Natural killer cell (primary cell): ENCODE measurements at regions of chr6 and their contacts with region 1.

Region 1: DNA sequence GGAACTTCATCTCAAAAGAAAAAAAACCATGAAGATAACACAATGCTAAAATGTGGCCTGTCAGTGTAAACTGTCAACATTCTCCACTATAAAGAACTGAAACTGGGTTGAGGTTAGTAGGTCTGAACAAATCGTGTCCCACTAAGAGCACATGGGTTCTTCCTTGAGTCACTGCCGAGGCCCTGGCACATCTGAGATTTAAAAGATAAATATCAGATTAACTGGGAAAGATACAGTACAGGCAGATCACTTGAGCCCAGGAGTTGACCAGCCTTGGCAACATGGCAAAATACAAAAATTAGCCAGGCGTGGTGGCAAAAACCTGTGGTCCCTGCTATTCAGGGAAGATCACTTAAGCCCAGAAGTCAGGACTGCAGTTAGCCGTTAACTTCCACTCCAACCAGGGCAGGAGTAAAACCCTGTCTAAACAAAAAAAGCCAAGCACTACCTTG is 5.6 kb downstream of the EEF1A1 start:
- DNase-seq: peak in 1 of 2 donors; percentile 49
- ATAC-seq: no peak
- H3K4me3 ChIP-seq: no peak overlapping the region
- H3K4me3 Mint-ChIP-seq: peak overlapping the region; percentile 53
- H3K27ac ChIP-seq: peak overlapping the region; percentile 55
- H3K27ac Mint-ChIP-seq: peak overlapping the region; percentile 84 to 100
- H3K4me1 ChIP-seq: peaks cover 40% of the 10 kb centered on the region
- H3K4me1 Mint-ChIP-seq: peaks cover 48 to 57% of the 10 kb centered on the region in 2 donors
- H3K27me3 ChIP-seq: no peaks in the 10 kb centered on the region
- H3K27me3 Mint-ChIP-seq: no peaks in the 10 kb centered on the region
- CTCF ChIP-seq: no peak

Region 2: DNA sequence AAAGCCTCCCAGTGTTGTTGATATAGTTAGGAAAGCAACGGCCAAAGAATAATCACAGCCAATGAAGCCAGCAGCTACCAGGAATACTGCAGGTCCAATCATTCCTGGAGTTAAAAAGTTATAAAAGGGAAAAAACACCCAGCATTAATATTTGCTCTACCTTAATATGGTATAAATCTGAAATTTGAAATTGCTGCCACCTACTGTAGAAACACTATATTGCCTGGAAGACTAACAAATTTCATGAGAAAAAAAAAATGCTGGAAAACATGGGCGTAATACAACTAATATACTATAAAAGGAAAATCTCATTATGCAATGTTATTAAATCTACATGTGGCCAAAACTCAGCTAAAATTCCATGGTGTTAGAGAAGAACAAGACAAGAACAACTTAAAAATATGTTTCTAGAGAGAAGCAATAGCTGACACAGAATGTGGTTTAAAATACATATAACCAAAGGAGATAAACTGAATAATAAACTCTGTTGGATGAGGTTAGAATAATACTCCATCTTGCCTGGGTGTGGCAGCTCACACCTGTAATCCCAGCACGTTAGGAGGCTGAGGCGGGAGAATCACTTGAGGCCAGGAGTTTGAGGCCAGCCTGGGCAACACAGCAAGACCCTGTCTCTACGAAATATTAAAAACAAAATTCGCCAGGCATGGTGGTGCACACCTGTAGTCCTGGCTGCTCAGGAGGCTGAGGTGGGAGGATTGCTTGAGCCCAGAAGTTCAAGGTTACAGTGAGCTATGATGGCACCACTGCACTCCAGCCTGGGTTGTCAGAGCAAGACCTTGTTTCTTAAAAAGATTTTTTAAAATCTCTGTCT is 95.4 kb after region 1 on chr6:
- intact Hi-C with region 1: loop called (anchors 1 kb)
- DNase-seq: peak in 1 of 2 donors; percentile 75
- ATAC-seq: peak; percentile 69 to 85 (median 71)
- H3K4me3 ChIP-seq: no peak overlapping the region
- H3K4me3 Mint-ChIP-seq: no peak overlapping the region
- H3K27ac ChIP-seq: no peak overlapping the region
- H3K27ac Mint-ChIP-seq: peak overlapping the region in 1 of 2 donors; percentile 35
- H3K4me1 ChIP-seq: no peaks in the 10 kb centered on the region
- H3K4me1 Mint-ChIP-seq: peaks cover 0 to 5% of the 10 kb centered on the region in 2 donors
- H3K27me3 ChIP-seq: no peaks in the 10 kb centered on the region
- H3K27me3 Mint-ChIP-seq: no peaks in the 10 kb centered on the region
- CTCF ChIP-seq: peak; percentile 87

Region 3: DNA sequence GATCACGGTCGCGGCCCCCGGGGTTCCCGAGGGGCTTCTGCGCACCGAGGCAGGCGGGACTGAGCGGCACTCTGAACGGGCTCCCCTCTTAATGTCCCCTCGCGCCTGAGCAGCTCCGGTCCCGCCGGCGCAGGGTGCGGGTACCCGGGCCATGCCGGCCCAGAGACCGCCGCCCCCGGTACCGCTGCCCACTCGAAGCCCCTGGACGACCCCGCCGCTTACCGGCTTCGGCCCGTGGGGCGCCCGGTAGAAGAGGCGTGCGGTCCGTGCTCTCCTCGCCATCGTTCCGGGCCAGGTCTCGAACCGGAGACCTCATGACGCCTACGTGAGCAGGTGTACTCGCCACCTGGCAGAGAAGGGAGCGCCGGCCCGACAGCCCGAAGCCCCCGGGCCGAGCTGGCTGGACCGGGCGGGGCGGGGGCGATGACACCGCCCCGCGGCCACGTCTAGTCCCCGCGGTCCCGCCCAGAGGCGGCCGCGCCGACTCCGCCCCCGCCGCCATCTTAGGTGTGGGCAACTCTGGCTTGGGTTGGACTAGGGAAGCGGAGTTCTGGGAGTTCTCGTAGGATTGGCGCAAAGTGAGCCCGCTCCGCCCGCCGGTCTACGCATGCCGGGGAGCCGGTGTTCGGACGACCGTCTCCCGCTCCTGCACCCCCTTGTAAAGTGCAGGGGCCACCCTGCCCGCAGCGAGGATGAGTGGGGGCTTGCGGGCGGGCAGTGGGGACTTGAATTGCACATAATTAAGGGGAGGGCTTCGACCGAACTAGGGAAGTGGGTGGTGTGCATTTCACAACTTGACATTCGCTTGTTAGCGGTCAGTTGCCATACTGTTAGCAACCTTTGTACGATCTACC is 138.6 kb after region 1 on chr6 and contains the start of gene SLC17A5:
- intact Hi-C with region 1: loop called (anchors 2 kb)
- DNase-seq: peak; percentile 84 to 93
- ATAC-seq: peak; percentile 84 to 95 (median 86)
- H3K4me3 ChIP-seq: peak within 1 kb of the TSS; percentile 81
- H3K4me3 Mint-ChIP-seq: peak within 1 kb of the TSS; percentile 96
- H3K27ac ChIP-seq: peak within 1 kb of the TSS; percentile 95
- H3K27ac Mint-ChIP-seq: peak within 1 kb of the TSS; percentile 94 to 98
- H3K4me1 ChIP-seq: peaks cover 16% of the 10 kb centered on the region
- H3K4me1 Mint-ChIP-seq: peaks cover 47 to 50% of the 10 kb centered on the region in 2 donors
- H3K27me3 ChIP-seq: no peaks in the 10 kb centered on the region
- H3K27me3 Mint-ChIP-seq: no peaks in the 10 kb centered on the region
- CTCF ChIP-seq: no peak
- total RNA-seq, gene SLC17A5: 8.5 to 13.8 (median 9.1) TPM